Posterior cingulate gyrus (tissue), 11 donors: ENCODE measurements at regions of chr4 and their contacts with region 1.

Region 1: DNA sequence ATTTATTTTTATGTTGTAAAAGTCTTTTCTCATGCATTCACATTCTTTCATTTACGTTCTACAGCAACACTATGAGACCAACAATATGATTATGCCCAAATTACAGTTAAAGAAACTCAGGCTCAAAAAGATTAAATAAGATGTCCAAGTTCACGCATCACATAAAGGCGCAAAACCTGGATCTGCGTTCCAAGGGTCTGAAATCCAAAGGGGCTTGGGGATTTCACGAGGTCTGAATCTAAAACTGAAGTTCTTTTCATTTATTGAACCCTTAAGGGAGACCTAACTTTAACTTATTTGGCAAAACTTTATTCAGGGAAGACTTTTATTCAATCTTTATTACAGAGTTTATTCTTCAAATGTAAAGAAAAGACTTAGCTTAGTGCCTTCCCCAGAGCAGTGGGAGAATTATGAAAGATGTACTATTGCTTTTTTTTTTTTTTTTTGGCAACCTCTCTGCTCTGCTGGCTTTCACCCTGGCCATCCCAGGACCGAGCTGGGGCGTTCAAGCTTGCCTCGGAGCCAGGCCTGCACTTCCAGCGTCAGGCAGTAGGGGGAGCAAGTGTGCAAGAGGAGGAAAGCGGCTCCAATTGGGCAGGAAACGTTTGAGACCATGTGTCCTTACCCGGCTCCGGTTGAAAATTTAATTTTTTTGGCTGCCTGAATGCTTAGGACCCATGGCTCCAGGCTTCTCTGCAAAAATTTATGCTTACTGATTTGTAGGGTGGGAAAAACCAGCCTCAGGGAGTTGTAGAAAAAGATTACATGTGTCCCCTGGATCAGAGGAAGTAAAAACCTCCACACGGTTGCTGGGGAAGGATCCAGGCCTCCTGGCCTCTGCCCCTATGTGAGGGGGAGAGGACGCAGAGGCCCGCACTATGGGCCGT is 344.3 kb upstream of the KLF3 start:
- DNase-seq: peak; percentile 72 to 99 (median 92)

Region 2: GRCh38 chr4:37762294-37762990 is 557.3 kb before region 1 on chr4:
- intact Hi-C with region 1: no loop called
- DNase-seq: no peak

Region 3: DNA sequence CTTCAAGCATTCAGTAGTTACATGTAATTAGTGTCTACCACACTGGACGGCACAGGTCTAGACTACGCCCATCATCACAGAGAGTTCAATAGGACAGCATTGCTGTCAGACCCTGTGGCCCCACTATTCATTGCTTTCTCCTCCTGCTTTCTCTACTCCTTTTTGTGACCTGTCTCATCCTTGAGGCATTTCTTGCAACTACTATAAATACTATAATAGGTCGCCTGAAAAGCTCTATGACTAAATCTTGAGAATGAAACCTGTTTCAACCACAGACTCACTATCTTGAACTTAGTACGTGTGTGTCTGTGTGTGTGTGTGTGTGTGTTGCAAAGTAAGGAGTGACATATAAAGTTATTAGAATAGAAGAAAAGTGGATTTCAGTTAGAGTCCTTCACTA is 91.4 kb after region 1 on chr4:
- intact Hi-C with region 1: no loop called
- DNase-seq: no peak

Region 4: DNA sequence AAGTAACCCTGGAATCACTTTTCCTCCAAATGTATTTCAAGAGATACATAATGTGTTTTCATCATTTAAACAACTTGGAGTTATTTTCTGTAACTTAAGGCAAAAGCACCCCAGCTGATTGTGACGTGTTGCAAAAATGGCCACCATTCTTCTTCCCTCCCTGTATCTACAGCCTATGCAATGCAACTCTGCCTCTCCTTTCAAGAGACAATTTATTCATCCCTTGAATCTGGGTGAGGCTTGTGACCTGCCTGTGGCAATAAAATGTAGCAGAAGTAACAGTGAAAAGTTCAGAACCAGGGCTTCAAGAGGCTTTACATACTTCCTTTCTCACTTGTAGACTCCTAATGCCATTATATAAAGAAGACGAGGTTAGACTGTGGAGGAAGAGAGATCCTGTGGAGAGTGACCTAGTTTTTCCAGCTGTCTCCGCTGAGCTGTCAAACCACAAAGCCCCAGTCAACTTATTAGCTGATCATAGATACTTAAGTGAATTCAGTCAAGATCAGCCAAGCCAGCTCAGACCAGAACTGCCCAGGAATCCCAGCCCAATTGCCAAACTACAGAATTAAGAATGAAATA is 263.3 kb after region 1 on chr4:
- intact Hi-C with region 1: loop called (anchors 10 kb)
- DNase-seq: no peak

Region 5: GRCh38 chr4:38675146-38676121 is 355.7 kb after region 1 on chr4:
- intact Hi-C with region 1: loop called (anchors 2 kb)
- DNase-seq: peak in 8 of 10 donors; percentile 49 to 93 (median 82)

Region 6: GRCh38 chr4:38730830-38731646 is 411.3 kb after region 1 on chr4:
- intact Hi-C with region 1: loop called (anchors 1 kb)
- DNase-seq: peak; percentile 31 to 96 (median 82)